ENCODE measurements at regions of chr4 and their contacts with region 1.

Region 1: DNA sequence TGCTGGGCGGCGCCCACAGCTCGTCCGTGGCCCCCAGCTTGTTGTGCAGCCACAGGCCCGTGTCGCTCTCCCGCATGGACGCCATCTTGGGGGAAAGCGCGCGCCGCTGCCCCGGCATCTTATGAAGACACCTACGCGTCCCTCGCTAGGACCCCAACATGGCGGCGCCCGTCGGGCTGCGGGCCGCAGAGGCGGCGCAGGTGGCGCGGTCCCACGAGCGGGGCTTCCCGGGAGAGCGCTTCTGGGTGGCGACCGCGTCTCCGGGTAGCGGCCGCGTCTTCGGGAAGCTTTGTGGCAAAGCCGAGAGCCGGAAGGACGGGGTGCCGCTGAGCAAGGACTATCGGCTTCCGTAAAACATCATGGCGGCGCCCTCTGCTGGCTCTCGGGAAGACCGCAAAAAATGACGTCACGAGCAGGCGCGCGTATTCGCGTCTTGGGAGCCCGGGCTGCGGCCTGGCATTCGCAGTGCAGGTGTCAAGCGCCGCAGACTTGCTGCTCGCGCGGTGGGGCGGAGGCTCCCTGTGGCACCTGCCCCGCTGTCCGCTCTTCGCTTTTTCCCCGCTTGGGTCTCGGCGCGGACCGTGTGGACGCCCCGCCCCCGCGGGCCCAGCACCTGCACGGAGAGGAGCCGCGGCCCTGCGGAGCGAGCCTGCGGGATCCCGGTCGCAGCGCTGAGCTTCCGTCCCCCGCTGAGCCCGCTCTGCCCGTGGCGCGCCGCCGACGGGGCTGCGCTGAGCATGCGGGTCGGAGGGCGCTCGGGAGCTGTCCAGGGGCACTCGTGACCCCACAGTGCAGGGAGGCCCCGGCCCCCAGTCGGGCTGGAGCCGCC is at the start of gene NELFA:
- DNase-seq: peak; percentile 92
- H3K4me3 ChIP-seq: peak within 1 kb of the TSS; percentile 95 to 99 (median 99)
- H3K27ac ChIP-seq: peak within 1 kb of the TSS; percentile 90
- H3K4me1 ChIP-seq: peaks cover 17% of the 10 kb centered on the region
- H3K27me3 ChIP-seq: no peaks in the 10 kb centered on the region
- CTCF ChIP-seq: no peak
- total RNA-seq, gene NELFA: 19.7 to 26.1 TPM

Region 2: GRCh38 chr4:1855333-1856041 is 153.6 kb before region 1 on chr4:
- CTCF ChIA-PET with region 1: no interaction called
- dilution Hi-C with region 1: no loop called
- in situ Hi-C with region 1: no loop called
- intact Hi-C with region 1: no loop called
- DNase-seq: no peak
- H3K4me3 ChIP-seq: peak overlapping the region; percentile 41 to 88 (median 82)
- H3K27ac ChIP-seq: peak overlapping the region; percentile 53
- H3K4me1 ChIP-seq: peaks cover 28% of the 10 kb centered on the region
- H3K27me3 ChIP-seq: no peaks in the 10 kb centered on the region
- CTCF ChIP-seq: no peak

Region 3: GRCh38 chr4:1960170-1960825 is 48.8 kb before region 1 on chr4:
- CTCF ChIA-PET with region 1: no interaction called
- dilution Hi-C with region 1: loop called (anchors 5 kb)
- in situ Hi-C with region 1: no loop called
- intact Hi-C with region 1: no loop called
- DNase-seq: no peak
- H3K4me3 ChIP-seq: no peak overlapping the region
- H3K27ac ChIP-seq: no peak overlapping the region
- H3K4me1 ChIP-seq: peaks cover 4% of the 10 kb centered on the region
- H3K27me3 ChIP-seq: no peaks in the 10 kb centered on the region
- CTCF ChIP-seq: no peak